Activated CD4-positive, alpha-beta T cell treated with anti-CD3 and anti-CD28 coated beads, Interleukin-2, amount 10 ng/mL, durations not matched to agents 24 days and 14 days (primary cell): ENCODE measurements at regions of chr15 and their contacts with region 1.

Region 1: DNA sequence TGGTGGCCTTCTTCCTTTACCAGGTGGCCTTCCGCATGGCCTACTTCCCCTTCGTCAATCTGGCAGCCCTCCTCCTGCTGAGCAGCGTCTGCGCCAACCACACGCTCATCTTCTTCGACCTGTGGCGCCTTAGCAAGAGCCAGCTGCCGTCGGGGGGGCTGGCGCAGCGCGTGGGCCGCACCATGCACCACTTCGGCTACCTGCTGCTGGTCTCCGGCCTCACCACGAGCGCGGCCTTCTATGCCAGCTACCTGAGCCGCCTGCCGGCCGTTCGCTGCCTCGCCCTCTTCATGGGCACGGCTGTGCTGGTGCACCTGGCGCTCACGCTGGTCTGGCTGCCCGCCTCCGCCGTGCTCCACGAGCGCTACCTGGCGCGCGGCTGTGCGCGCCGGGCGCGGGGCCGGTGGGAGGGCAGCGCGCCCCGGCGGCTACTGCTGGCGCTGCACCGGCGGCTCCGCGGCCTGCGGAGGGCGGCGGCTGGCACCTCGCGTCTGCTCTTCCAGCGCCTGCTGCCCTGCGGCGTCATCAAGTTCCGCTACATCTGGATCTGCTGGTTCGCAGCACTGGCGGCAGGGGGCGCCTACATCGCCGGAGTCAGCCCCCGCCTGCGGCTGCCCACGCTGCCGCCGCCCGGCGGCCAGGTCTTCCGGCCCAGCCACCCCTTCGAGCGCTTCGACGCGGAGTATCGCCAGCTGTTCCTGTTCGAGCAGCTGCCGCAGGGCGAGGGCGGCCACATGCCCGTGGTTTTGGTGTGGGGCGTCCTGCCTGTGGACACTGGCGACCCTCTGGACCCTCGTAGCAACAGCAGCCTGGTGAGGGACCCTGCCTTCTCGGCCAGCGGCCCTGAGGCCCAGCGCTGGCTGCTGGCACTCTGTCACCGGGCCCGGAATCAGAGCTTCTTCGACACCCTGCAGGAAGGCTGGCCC is 9.9 kb downstream of the DISP2 start:
- DNase-seq: peak; percentile 96
- H3K4me3 Mint-ChIP-seq: peak overlapping the region; percentile 83
- H3K27ac Mint-ChIP-seq: peak overlapping the region; percentile 71
- H3K4me1 Mint-ChIP-seq: peaks cover 8% of the 10 kb centered on the region
- H3K27me3 Mint-ChIP-seq: peaks cover 11% of the 10 kb centered on the region

Region 2: GRCh38 chr15:40323239-40323952 is 44.6 kb before region 1 on chr15 and contains the start of gene INAFM2:
- intact Hi-C with region 1: no loop called
- DNase-seq: peak; percentile 97
- H3K4me3 Mint-ChIP-seq: peak within 1 kb of the TSS; percentile 82
- H3K27ac Mint-ChIP-seq: no peak within 1 kb of the TSS
- H3K4me1 Mint-ChIP-seq: peaks cover 31% of the 10 kb centered on the region
- H3K27me3 Mint-ChIP-seq: peaks cover 16% of the 10 kb centered on the region
- total RNA-seq, gene INAFM2: 22.8 and 23.3 TPM in 2 replicates

Region 3: DNA sequence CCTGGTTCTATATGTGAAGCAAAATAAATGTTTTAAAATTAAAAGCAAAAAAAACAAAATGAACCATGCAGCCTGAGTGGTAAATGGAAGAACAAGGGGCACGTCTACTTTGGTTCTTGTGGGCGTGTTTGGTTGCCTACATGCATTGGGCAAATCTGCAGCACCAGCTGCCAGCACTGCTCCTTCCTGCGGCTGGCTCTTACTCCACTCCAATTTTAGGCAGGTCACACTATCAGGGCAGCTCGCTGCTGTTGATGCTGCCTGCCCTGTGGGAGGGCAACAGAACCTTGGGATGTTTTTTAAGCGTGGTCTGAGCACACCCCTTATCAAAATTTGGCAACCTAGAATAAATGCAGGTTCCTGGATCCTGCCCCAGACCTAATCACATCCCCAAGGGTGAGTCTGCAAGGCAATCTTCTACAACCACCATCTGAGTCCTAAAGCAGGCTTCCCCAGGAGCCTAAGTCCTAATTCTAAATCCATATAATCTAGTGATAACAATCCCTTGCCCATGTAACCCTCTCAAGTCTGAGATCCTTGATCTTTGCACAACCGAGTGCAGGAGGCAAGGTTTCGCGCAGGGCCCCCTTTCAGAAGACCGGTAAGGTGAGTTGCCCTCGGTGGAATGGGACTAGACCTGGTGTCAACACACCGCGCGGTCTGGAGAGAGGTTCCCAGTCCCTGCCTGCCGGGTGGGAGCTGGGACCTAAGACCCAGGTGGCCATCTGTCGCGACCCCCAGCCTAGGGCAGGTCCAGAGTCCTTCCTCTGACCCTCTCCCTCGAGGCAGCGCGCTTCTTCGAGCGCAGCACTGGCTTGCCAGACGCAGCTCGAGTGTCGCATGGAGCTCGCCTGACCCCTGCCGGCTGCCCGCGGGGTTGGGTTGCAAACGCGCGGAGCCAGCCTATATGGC is 53.6 kb after region 1 on chr15:
- intact Hi-C with region 1: loop called (anchors 5 kb)
- DNase-seq: peak; percentile 96
- H3K4me3 Mint-ChIP-seq: no peak overlapping the region
- H3K27ac Mint-ChIP-seq: no peak overlapping the region
- H3K4me1 Mint-ChIP-seq: no peaks in the 10 kb centered on the region
- H3K27me3 Mint-ChIP-seq: no peaks in the 10 kb centered on the region